AG04450 (cell line): ENCODE measurements at regions of chrX and their contacts with region 1.

Region 1: GRCh38 chrX:107654872-107655761 is 26.8 kb downstream of the PRPS1 start:
- DNase-seq: peak; percentile 60
- H3K4me3 ChIP-seq: no peak overlapping the region; the same call in 1 of the 2 replicates
- H3K27ac ChIP-seq: peak overlapping the region; percentile 77
- H3K27me3 ChIP-seq: no peaks in the 10 kb centered on the region
- CTCF ChIP-seq: peak; percentile 71

Region 2: DNA sequence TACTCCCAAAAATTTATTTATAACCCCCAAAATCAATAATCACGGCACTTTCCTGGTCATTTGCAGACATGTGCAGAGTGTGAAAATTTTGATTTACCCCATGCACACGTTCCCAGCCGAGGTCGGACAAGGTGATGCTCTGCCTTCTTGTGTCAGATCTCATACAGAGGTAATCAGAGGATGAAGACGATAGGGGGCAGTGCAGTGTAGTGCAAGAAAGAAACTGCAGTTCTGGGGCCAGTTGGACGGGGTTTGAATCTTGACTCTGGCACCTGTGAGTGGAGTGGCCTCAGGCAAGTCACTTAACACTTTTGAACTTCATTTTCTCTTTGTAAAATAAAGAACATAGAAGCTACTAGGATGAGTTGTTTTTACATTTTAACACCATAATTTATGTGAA is 117.3 kb before region 1 on chrX:
- CTCF ChIA-PET with region 1: interaction called, 19 read pairs
- POLR2A ChIA-PET with region 1: no interaction called
- DNase-seq: no peak
- H3K4me3 ChIP-seq: no peak overlapping the region
- H3K27ac ChIP-seq: no peak overlapping the region
- H3K27me3 ChIP-seq: no peaks in the 10 kb centered on the region
- CTCF ChIP-seq: peak; percentile 60

Region 3: GRCh38 chrX:107627838-107628661 is 27.1 kb before region 1 on chrX and contains the start of gene PRPS1:
- CTCF ChIA-PET with region 1: interaction called, 32 read pairs
- POLR2A ChIA-PET with region 1: interaction called, 3 read pairs
- DNase-seq: peak; percentile 75
- H3K4me3 ChIP-seq: peak within 1 kb of the TSS; percentile 81
- H3K27ac ChIP-seq: peak within 1 kb of the TSS; percentile 31
- H3K27me3 ChIP-seq: no peaks in the 10 kb centered on the region
- CTCF ChIP-seq: no peak
- polyA plus RNA-seq, gene PRPS1: 64.2 and 67.9 TPM in 2 replicates

Region 4: GRCh38 chrX:107672955-107673378 is 17.9 kb after region 1 on chrX:
- CTCF ChIA-PET with region 1: interaction called, 16 read pairs
- POLR2A ChIA-PET with region 1: no interaction called
- DNase-seq: no peak
- H3K4me3 ChIP-seq: no peak overlapping the region
- H3K27ac ChIP-seq: no peak overlapping the region
- H3K27me3 ChIP-seq: no peaks in the 10 kb centered on the region
- CTCF ChIP-seq: peak; percentile 64

Region 5: DNA sequence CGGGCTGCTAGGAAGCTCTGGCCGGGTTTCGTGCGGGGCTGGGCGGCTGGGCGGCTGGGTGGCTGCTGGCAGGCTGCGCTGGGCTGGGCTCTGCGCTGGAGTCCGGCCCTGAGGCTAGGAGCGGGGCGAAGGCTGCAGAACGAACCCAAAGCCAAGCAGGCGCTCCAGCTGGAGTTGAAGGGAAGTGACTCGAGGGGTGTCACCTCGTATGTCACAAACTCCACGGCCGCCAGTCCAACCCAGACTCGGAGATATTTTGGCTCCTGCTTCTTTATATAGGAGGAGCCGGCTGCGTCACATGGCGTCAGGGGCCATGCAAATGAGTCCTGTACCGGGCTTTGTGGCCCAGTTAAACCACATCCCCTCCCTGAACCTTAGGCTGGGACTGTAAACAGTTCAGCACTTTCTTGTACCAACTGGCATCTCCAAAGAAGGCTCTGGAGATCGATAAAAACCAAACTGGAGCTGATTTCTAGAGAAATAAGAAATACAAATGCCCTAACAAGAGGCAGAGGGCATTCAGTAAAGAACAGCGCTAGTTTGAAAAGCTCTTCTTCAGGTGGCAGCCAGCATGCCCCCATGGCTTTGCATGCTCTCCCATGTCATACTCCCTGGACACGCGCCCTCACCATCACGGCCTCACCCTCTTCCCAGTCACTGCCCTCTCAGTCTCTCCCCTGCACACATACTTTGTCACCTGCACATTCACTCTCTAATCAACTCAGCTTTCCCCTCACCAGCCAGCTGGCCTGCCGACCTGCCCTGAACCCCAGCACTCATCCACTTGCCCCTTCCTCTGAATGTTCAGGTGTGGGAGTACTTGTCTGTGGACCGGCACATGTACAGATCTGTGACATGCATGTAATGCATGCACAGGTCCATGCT is 61.9 kb after region 1 on chrX:
- CTCF ChIA-PET with region 1: interaction called, 114 read pairs
- POLR2A ChIA-PET with region 1: interaction called, 3 read pairs
- DNase-seq: no peak
- H3K4me3 ChIP-seq: peak overlapping the region; percentile 66
- H3K27ac ChIP-seq: peak overlapping the region; percentile 31
- H3K27me3 ChIP-seq: no peaks in the 10 kb centered on the region
- CTCF ChIP-seq: no peak

Region 6: GRCh38 chrX:107776649-107777535 is 121.8 kb after region 1 on chrX:
- CTCF ChIA-PET with region 1: interaction called, 63 read pairs
- POLR2A ChIA-PET with region 1: interaction called, 7 read pairs
- DNase-seq: peak; percentile 62
- H3K4me3 ChIP-seq: peak overlapping the region; percentile 50
- H3K27ac ChIP-seq: no peak overlapping the region
- H3K27me3 ChIP-seq: peaks cover 22% of the 10 kb centered on the region
- CTCF ChIP-seq: peak; percentile 60